ENCODE measurements at regions of chr22 and their contacts with region 1.

Region 1: DNA sequence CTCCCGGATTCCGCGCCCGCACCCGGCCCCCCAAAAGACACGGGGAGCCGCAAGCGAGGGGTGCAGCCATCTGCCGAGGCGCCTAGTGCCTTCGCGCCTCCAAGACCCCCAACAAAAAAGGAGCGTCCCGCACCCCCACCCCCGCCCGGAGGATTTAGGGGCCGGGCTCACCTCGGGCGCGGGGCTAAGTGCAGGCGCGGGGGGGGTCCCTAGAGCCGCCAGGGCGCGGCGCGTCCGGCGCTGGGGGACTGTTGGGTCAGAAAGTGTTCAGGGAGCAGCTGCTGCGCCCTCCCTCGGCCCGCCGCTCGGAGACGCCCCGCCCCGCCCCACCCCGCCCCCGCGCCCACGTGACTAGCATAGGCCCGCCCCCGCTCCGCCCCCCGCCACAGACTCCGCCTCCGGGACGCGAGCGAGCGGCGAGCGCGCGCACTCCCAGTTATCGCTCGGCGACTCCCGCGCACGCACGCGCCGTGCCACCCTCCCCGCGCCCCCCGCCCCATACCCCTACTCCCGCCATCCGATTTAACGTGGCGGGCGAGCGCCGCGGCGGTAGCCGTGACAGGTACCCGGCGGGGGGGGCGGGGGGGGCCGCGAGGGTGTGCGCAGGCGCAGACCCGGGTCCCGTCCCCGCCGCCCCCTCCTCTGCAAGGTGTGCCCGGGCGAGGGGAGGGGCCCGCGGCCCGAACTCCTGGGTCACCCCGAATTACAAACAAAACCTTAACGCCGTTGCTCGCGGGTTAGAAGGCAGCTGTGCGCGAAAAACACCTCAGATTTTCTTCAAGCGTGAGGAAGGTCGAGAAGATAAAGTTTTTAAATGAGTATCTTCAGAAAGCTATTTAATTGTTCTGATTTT is 56.2 kb downstream of the KCNJ4 start:
- DNase-seq: peak; percentile 65
- ATAC-seq: peak; percentile 65
- H3K4me3 ChIP-seq: peak overlapping the region; percentile 82
- H3K27ac ChIP-seq: no peak overlapping the region
- H3K4me1 ChIP-seq: peaks cover 12% of the 10 kb centered on the region; the same call in 1 of the 2 replicates
- H3K27me3 ChIP-seq: no peaks in the 10 kb centered on the region
- CTCF ChIP-seq: no peak

Region 2: GRCh38 chr22:38569972-38570778 is 171.3 kb after region 1 on chr22 and contains the start of gene DMC1:
- CTCF ChIA-PET with region 1: no interaction called
- POLR2A ChIA-PET with region 1: no interaction called
- intact Hi-C with region 1: loop called (anchors 10 kb)
- DNase-seq: peak; percentile 77
- ATAC-seq: peak; percentile 65
- H3K4me3 ChIP-seq: peak within 1 kb of the TSS; percentile 80
- H3K27ac ChIP-seq: no peak within 1 kb of the TSS
- H3K4me1 ChIP-seq: peaks cover 9% of the 10 kb centered on the region
- H3K27me3 ChIP-seq: no peaks in the 10 kb centered on the region
- CTCF ChIP-seq: no peak
- total RNA-seq, gene DMC1: not detected in 2 replicates